ENCODE measurements at regions of chr12 and their contacts with region 1.

Region 1: DNA sequence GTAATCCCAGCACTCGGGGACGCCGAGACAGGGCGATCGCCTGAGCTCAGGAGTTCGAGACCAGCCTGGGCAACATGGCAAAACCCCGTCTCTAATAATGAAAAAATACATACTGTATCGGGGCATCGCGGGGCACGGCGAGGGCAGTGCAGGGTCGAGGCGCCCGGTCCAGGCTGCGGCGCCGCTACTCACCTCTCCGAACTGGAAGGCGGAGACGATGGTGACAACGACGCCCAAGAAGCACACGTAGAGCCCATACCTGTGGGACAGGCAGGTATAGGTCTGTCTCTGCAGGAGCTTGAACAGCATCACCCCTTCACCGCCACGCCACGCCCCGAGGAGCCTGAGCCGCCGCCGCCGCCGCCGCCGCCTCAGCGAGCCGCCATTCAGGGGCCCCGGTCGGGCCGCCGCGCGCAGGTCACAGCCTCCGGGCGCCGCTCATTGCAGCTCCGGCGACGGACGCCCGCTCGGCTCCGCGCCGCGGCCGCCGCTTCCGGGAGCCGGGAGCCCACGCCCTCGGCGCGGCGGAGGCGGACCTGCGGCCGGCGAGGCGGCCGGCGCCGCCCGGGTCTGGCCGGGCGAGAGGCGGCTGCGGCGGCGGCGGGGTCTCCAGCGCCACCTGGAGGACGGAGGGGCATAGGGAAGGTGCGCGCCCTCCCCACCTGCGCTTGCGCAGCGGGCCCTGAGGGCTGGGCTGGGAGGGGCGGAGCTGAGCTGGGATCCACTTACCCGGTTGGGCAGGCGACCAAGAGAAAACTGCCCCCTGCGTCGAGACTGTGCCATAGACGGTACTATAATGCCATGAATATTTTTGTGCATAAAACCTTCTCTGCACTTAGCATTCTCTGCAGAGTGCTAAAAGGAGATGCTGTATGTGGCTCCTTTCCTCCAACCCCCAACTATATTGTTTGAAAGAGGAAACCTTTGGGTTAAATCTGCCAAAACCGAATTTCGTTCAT is at the start of gene GNPTAB:
- DNase-seq: peak; percentile 96
- H3K4me3 ChIP-seq: peak within 1 kb of the TSS; percentile 79
- H3K27ac ChIP-seq: peak within 1 kb of the TSS; percentile 70
- H3K4me1 ChIP-seq: peaks cover 49% of the 10 kb centered on the region
- CTCF ChIP-seq: peak; percentile 74
- total RNA-seq, gene GNPTAB: 35.8 and 38.9 TPM in 2 replicates

Region 2: GRCh38 chr12:101414533-101415119 is 416.0 kb before region 1 on chr12:
- CTCF ChIA-PET with region 1: no interaction called
- POLR2A ChIA-PET with region 1: no interaction called
- intact Hi-C with region 1: loop called (anchors 2 kb)
- DNase-seq: peak; percentile 73
- H3K4me3 ChIP-seq: no peak overlapping the region
- H3K27ac ChIP-seq: no peak overlapping the region
- H3K4me1 ChIP-seq: peaks cover 4% of the 10 kb centered on the region
- CTCF ChIP-seq: peak; percentile 93

Region 3: DNA sequence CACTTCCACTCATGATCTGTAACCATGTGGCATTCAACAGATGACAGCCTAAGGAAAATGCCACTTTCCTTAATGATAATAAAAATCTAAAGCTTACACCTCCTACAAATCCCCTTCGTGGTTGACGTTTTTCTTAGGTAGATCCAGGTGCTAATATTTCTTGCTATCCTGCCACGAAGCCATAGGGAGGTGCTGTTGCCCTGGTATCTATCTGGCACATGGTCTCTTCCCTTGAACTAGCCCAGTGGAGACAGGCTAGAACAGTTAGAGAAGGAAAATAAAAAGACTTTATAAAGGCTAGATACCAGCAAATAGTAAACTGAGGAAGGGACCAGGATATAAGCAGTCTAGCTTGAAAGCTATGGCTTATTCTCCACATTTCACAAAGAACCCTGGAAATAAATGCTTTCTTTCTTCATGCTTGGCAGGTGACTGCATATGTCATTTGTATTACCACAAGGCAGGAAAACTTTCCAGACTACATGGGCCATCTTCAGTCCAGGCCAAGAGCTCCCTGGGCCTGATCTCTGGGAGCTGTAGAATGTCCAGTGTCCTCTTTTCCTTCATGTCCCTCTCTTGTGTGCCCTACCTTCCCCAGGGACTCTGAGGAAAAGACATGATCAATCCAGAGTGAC is 340.2 kb before region 1 on chr12:
- CTCF ChIA-PET with region 1: no interaction called
- POLR2A ChIA-PET with region 1: interaction called, 3 read pairs
- intact Hi-C with region 1: loop called (anchors 2 kb)
- DNase-seq: peak; percentile 61
- H3K4me3 ChIP-seq: no peak overlapping the region
- H3K27ac ChIP-seq: no peak overlapping the region
- H3K4me1 ChIP-seq: peaks cover 8% of the 10 kb centered on the region
- CTCF ChIP-seq: peak; percentile 83

Region 4: DNA sequence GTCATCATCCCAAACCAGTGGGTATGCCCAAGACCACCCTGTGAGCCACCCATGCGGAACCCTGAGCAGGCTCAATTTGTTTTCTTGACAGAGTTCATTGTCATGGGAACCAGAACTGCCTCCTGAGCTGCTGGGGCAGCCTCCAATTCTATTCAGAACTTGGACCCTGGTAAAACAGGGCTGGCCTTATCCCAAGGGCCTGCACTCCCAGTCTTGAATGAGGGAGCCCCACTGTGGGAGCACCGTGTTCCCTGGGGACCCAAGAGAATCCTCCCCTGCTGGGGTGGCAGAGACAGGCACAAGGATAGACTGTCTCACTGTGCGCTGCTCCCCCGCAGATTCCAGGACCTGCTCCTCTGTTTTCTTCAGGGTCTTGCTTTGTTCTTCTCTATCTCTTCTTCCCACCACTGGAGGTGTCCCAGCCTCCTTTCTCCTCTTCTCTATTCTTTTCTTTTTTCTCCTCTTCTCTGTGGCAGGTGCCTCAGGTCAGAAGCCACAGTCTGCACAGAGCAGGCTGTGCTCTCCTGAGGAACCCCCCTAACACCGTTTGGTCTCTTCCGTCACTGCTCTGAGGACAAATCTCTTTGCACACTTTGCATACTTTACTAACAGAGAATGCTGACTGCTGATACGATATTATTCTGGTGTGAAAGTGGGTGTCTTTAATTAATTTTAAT is 164.5 kb before region 1 on chr12:
- CTCF ChIA-PET with region 1: no interaction called
- POLR2A ChIA-PET with region 1: no interaction called
- intact Hi-C with region 1: no loop called
- DNase-seq: no peak
- H3K4me3 ChIP-seq: no peak overlapping the region
- H3K27ac ChIP-seq: no peak overlapping the region
- H3K4me1 ChIP-seq: peaks cover 14% of the 10 kb centered on the region
- CTCF ChIP-seq: no peak

Region 5: DNA sequence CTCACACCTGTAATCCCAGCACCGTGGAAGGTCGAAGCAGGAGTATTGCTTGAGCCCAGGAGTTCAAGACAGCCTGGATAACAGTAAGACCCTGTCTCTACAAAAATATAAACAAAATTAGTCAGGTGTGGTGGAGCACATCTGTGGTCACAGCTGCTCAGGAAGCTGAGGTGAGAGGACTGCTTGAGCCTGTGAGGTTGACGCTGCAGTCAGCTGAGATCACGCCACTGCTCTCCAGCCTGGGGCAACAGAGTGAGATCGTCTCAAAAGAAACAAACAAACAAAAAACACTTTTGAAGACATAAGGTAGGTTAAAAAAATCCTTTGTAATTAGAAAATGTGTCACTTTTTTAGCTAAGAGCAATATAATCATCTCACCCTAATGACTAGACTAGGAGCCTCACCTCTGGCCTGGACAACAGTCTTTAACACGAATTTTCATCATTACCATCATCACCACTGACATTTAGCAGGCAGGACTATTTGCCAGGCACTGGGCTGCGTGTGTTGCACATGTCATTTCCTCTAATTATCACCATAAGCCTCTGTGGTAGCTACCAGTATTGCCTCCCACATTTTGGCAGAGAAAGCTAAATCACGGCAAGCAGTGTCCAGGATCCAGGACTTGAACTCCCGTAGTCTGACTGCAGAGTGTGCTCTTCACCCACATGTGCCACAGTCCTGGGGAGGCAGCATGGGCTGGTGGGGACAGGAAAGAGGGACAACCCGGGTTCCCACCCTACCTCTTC is 86.7 kb before region 1 on chr12:
- CTCF ChIA-PET with region 1: interaction called, 5 read pairs
- POLR2A ChIA-PET with region 1: interaction called, 10 read pairs
- intact Hi-C with region 1: loop called (anchors 1 kb)
- DNase-seq: peak; percentile 93
- H3K4me3 ChIP-seq: peak overlapping the region; percentile 47
- H3K27ac ChIP-seq: peak overlapping the region; percentile 95
- H3K4me1 ChIP-seq: peaks cover 66% of the 10 kb centered on the region
- CTCF ChIP-seq: peak; percentile 79

Region 6: GRCh38 chr12:101854747-101855146 is 24.1 kb after region 1 on chr12:
- CTCF ChIA-PET with region 1: no interaction called
- POLR2A ChIA-PET with region 1: interaction called, 12 read pairs
- intact Hi-C with region 1: no loop called
- DNase-seq: peak; percentile 76
- H3K4me3 ChIP-seq: peak overlapping the region; percentile 0
- H3K27ac ChIP-seq: peak overlapping the region; percentile 53
- H3K4me1 ChIP-seq: peaks cover 53% of the 10 kb centered on the region
- CTCF ChIP-seq: no peak

Region 7: GRCh38 chr12:101902641-101903040 is 72.0 kb after region 1 on chr12:
- CTCF ChIA-PET with region 1: no interaction called
- POLR2A ChIA-PET with region 1: no interaction called
- intact Hi-C with region 1: no loop called
- DNase-seq: no peak
- H3K4me3 ChIP-seq: no peak overlapping the region
- H3K27ac ChIP-seq: no peak overlapping the region
- H3K4me1 ChIP-seq: no peaks in the 10 kb centered on the region
- CTCF ChIP-seq: no peak